SK-N-SH (cell line): ENCODE measurements at regions of chr15 and their contacts with region 1.

Region 1: GRCh38 chr15:64911311-64912191 is at the start of gene ANKDD1A:
- DNase-seq: peak; percentile 98
- H3K4me3 ChIP-seq: peak within 1 kb of the TSS; percentile 61 to 73
- H3K27ac ChIP-seq: peak within 1 kb of the TSS in 1 of 2 experiments; percentile 64; a peak in 2 of 4 replicates
- H3K4me1 ChIP-seq: peaks cover 0 to 23% of the 10 kb centered on the region in 2 experiments; a peak in 2 of 4 replicates
- H3K27me3 ChIP-seq: no peaks in the 10 kb centered on the region
- CTCF ChIP-seq: no peak
- EP300 ChIP-seq: no peak
- RAD21 ChIP-seq: no peak
- polyA plus RNA-seq, gene ANKDD1A: 7.2 and 8.6 TPM in 2 replicates

Region 2: DNA sequence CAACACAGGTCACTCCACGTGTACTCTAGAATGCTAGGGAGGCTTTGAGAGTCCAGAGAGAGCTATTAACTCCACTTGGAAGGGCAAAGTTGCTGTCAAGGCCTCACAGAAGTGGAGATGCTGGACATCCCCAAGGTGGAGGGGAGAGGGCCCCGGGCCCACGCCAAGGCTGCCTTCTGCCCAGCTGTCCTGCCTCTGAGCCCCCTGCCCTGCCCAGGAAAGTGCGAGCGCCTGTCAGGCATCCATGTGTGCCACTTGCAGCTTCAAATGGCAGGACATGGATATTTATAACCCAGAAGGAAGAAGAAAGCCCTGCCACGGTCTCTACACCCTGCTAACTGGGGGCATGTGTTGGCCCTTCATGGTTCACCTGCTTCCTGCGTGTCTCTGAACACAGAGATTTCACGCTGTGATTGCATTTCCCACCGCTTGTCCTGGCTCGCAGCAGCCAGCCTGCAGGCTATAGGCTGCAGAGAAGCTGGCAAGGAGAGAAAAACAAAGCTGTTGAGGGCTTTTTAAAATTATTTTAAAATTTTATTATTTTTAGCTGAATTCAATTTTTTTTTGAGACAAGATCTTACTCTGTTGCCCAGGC is 17.2 kb after region 1 on chr15:
- CTCF ChIA-PET with region 1: interaction called, 10 read pairs
- POLR2A ChIA-PET with region 1: interaction called, 8 read pairs
- DNase-seq: peak; percentile 56
- H3K4me3 ChIP-seq: no peak overlapping the region
- H3K27ac ChIP-seq: no peak overlapping the region; a peak in 1 of 4 replicates
- H3K4me1 ChIP-seq: peaks cover 0 to 12% of the 10 kb centered on the region in 2 experiments; a peak in 1 of 4 replicates
- H3K27me3 ChIP-seq: no peaks in the 10 kb centered on the region
- CTCF ChIP-seq: no peak
- EP300 ChIP-seq: no peak
- RAD21 ChIP-seq: no peak